AG04449 (cell line): ENCODE measurements at regions of chr10 and their contacts with region 1.

Region 1: GRCh38 chr10:93482145-93482834 is at the start of gene MYOF:
- DNase-seq: peak; percentile 83
- H3K4me3 ChIP-seq: peak within 1 kb of the TSS; percentile 62
- CTCF ChIP-seq: peak; percentile 57

Region 2: DNA sequence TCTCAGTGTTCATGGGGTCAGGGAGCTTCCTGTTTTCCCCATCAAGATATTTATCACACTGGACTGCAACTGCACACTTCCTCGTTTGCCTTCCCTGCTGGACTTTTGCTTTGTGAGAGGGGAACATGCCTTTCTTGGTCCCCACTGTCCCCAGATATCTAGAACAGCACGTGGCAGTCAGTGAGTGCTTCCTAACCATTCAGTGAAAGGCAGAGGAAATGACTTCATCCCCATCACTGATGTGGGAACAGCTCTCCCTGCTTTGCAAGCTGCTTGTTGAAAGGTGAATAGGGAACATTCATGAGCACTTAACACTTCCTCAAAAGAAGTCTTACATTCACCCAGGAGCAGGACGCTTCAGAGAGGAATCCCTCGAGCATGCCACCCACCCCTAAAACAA is 135.6 kb before region 1 on chr10:
- CTCF ChIA-PET with region 1: interaction called, 23 read pairs
- POLR2A ChIA-PET with region 1: no interaction called
- DNase-seq: no peak
- H3K4me3 ChIP-seq: no peak overlapping the region
- CTCF ChIP-seq: no peak

Region 3: GRCh38 chr10:93376372-93377293 is 105.7 kb before region 1 on chr10:
- CTCF ChIA-PET with region 1: interaction called, 434 read pairs
- POLR2A ChIA-PET with region 1: interaction called, 39 read pairs
- DNase-seq: peak; percentile 67
- H3K4me3 ChIP-seq: no peak overlapping the region; the same call in 1 of the 2 replicates
- CTCF ChIP-seq: peak; percentile 71

Region 4: GRCh38 chr10:93406364-93407145 is 75.7 kb before region 1 on chr10:
- CTCF ChIA-PET with region 1: interaction called, 20 read pairs
- POLR2A ChIA-PET with region 1: interaction called, 3 read pairs
- DNase-seq: no peak
- H3K4me3 ChIP-seq: no peak overlapping the region
- CTCF ChIP-seq: no peak

Region 5: DNA sequence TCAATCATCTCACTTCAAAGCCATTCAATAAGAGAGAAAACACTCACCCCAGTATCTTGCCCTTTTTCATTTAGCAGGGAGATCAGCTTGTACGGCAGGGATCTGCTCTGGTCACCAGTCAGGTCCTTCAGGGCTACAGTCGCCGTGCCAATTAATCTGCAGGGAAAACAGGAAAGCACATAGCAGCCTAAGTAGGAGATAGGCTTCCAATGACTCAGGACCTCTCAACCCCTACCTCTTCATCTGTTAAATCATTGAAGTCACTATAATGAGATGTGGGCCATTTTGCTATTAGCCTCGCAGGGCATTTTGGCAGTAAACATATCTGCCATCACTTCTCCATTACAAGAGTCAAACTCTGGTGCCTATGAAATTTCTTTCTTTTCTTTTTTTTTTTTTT is 50.9 kb before region 1 on chr10:
- CTCF ChIA-PET with region 1: interaction called, 14 read pairs
- POLR2A ChIA-PET with region 1: interaction called, 13 read pairs
- DNase-seq: no peak
- H3K4me3 ChIP-seq: no peak overlapping the region
- CTCF ChIP-seq: no peak

Region 6: DNA sequence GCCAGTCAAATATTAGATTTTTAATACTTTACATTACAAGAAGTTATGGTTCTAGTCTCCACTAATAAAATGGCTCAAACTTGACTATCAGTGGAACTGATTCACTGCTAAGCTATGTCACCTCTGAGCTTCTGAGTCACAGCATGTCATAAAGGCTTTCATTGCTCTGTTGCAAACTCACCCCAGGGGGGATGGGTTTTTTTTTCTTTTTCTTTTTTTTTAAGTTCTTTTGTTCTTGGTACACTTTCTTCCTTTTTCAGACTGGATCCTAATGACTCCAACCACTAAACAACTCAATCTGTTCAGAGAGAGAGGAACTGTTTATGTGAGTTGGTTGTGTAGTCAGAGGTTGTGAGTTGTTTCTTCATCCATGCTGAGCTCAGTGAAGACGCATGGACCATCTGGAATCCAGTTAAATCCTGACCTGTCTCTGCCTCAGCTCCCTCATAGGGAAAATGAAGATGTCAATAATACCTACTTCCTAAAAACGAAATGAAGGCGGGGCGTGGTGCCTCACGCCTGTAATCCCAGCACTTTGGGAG is 11.1 kb before region 1 on chr10:
- CTCF ChIA-PET with region 1: interaction called, 22 read pairs
- POLR2A ChIA-PET with region 1: interaction called, 46 read pairs
- DNase-seq: peak; percentile 70
- H3K4me3 ChIP-seq: no peak overlapping the region
- CTCF ChIP-seq: no peak